ENCODE measurements at regions of chr13 and their contacts with region 1.

Region 1: DNA sequence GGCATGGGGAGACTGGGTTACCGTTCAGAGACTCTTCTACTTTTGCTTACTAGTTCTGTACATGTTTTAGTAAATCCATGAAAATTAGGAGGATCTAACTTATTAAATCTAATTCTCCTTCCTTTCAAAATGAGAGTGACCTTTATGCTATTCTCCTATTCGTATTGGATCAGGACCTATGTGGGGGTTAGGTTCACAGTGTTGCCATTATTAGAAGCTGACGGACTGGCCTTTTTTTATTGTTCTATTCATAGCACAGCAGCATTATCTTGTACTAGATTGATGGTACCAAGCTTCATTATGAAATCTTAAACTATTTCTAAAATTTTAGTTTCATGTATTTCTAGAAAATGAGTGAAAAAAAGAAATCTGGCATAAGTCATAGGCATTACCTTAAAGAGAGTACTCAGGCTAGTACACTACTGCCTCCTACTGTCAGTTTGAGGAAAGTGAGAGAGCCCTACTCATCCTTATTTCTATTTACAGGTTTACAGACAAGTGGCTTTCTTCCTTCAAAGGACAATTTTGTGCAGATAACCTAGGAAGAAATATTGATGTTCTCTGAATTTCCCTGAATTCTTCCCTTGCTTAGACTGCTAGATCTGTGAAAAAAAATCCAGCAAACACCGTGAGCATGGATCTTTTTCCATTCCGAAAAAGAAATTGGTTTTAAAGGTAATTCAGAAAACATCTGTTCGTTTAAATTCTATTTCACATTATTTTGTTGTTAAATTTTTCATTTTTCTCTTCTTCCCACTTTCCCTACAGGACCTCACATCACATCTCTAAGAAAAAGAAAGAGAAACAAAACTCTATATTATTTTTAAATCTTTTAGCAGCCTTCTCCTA is 485.5 kb downstream of the DIAPH3 start:
- DNase-seq: peak in 4 of 42 donors; percentile 18 to 50 (median 30)

Region 2: GRCh38 chr13:59391696-59392095 is 286.5 kb before region 1 on chr13:
- intact Hi-C with region 1: loop called (anchors 5 kb)
- DNase-seq: peak in 29 of 42 donors; percentile 5 to 73 (median 34)

Region 3: GRCh38 chr13:59750860-59751259 is 72.7 kb after region 1 on chr13:
- intact Hi-C with region 1: no loop called
- DNase-seq: peak in 40 of 42 donors; percentile 14 to 77 (median 46)

Region 4: GRCh38 chr13:59790626-59791025 is 112.4 kb after region 1 on chr13:
- intact Hi-C with region 1: no loop called
- DNase-seq: no peak

Measured in head of caudate nucleus (tissue), 42 donors.